Naive thymus-derived CD4-positive, alpha-beta T cell (primary cell): ENCODE measurements at regions of chr12 and their contacts with region 1.

Region 1: GRCh38 chr12:108514973-108515814 is at the start of gene FICD:
- DNase-seq: peak; percentile 93 to 99 (median 98)
- ATAC-seq: peak; percentile 96
- H3K4me3 ChIP-seq: peak within 1 kb of the TSS; percentile 81
- H3K4me3 Mint-ChIP-seq: peak within 1 kb of the TSS; percentile 91 to 97 (median 94)
- H3K27ac ChIP-seq: peak within 1 kb of the TSS; percentile 78
- H3K27ac Mint-ChIP-seq: peak within 1 kb of the TSS; percentile 89 to 95 (median 94)
- H3K4me1 ChIP-seq: peaks cover 8% of the 10 kb centered on the region in 2 donors
- H3K4me1 Mint-ChIP-seq: peaks cover 17 to 40% (median 22%) of the 10 kb centered on the region in 7 donors
- H3K27me3 ChIP-seq: no peaks in the 10 kb centered on the region
- H3K27me3 Mint-ChIP-seq: peaks cover 0 to 2% (median 0%) of the 10 kb centered on the region in 5 donors
- total RNA-seq, gene FICD: 2.8 to 9.7 (median 6.9) TPM

Region 2: DNA sequence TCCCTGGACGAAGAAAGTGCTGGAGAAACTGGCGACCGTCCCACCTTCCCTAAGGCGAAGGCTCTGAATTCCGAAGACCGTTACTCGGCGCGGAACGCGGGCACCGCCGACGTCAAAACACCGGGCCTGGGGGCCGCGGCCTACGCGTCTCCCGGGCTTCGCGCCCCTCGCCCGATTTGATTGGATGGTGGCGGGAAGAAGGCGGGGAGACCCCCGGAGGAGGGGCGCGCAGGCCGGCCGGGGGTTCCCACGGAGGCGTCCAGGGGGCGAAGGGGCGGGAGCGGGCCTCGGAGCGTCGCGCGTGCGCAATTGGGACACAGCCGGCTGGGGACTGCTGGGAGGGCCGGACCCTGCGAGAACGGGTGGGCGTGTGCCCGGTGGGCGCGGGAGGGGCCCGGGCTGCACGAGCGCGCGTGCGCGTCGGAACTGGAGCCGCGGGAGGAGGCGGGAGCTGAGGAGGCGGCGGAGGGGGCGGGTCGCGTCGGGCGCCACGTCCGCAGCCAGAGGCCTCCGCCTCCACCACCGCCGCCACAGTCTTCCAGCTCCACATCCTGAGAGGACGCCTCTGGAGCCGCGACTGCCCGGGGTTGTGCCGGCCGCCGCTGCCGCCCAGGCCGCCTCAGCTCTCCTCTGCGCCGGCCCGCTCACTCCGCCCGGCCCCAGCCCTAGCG is 1559.7 kb before region 1 on chr12 and contains the start of gene TMEM263:
- CTCF ChIA-PET with region 1: no interaction called
- POLR2A ChIA-PET with region 1: no interaction called
- intact Hi-C with region 1: loop called in 1 of 2 experiments (anchors 1 kb)
- DNase-seq: peak; percentile 78 to 91 (median 86)
- ATAC-seq: peak; percentile 90
- H3K4me3 ChIP-seq: peak within 1 kb of the TSS; percentile 94
- H3K4me3 Mint-ChIP-seq: peak within 1 kb of the TSS; percentile 88 to 99 (median 96)
- H3K27ac ChIP-seq: peak within 1 kb of the TSS; percentile 94
- H3K27ac Mint-ChIP-seq: peak within 1 kb of the TSS; percentile 93 to 97 (median 96)
- H3K4me1 ChIP-seq: peaks cover 8 to 10% of the 10 kb centered on the region in 2 donors
- H3K4me1 Mint-ChIP-seq: peaks cover 17 to 57% (median 38%) of the 10 kb centered on the region in 7 donors
- H3K27me3 ChIP-seq: no peaks in the 10 kb centered on the region
- H3K27me3 Mint-ChIP-seq: peaks cover 0 to 11% (median 0%) of the 10 kb centered on the region in 5 donors
- total RNA-seq, gene TMEM263: 20.0 to 45.5 (median 31.5) TPM

Region 3: GRCh38 chr12:107670999-107671643 is 844.1 kb before region 1 on chr12:
- CTCF ChIA-PET with region 1: interaction called, 5 read pairs
- POLR2A ChIA-PET with region 1: no interaction called
- intact Hi-C with region 1: loop called (anchors 1 kb)
- DNase-seq: peak in 2 of 9 donors; percentile 14 to 44
- ATAC-seq: peak; percentile 67
- H3K4me3 ChIP-seq: no peak overlapping the region
- H3K4me3 Mint-ChIP-seq: no peak overlapping the region
- H3K27ac ChIP-seq: no peak overlapping the region
- H3K27ac Mint-ChIP-seq: peak overlapping the region in 1 of 9 donors; percentile 69
- H3K4me1 ChIP-seq: no peaks in the 10 kb centered on the region
- H3K4me1 Mint-ChIP-seq: peaks cover 0 to 7% (median 5%) of the 10 kb centered on the region in 7 donors
- H3K27me3 ChIP-seq: no peaks in the 10 kb centered on the region
- H3K27me3 Mint-ChIP-seq: peaks cover 7 to 25% (median 21%) of the 10 kb centered on the region in 5 donors

Region 4: DNA sequence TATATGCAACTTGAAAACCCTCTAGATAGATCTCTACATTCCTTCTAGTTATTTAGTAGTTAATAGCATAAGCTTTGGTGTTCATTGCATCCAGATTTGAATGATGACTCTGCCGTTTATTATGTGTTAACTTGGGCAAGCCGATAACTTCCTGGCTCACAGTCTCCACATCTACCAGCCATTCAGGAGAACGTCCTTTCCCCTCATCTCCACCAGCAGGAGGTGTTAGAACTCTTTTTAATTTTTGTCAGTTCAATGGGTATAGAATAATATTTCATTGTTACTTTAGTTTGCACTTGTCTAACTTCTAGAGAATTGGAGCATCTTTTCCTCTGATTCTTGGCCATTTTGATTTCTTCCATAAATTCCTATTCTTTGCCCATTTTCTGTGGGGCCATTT is 416.1 kb before region 1 on chr12:
- CTCF ChIA-PET with region 1: no interaction called
- POLR2A ChIA-PET with region 1: no interaction called
- intact Hi-C with region 1: loop called in 1 of 2 experiments (anchors 2 kb)
- DNase-seq: no peak
- ATAC-seq: no peak
- H3K4me3 ChIP-seq: no peak overlapping the region
- H3K4me3 Mint-ChIP-seq: no peak overlapping the region
- H3K27ac ChIP-seq: no peak overlapping the region
- H3K27ac Mint-ChIP-seq: no peak overlapping the region
- H3K4me1 ChIP-seq: no peaks in the 10 kb centered on the region
- H3K4me1 Mint-ChIP-seq: no peaks in the 10 kb centered on the region
- H3K27me3 ChIP-seq: no peaks in the 10 kb centered on the region
- H3K27me3 Mint-ChIP-seq: peaks cover 5 to 26% (median 17%) of the 10 kb centered on the region in 5 donors

Region 5: GRCh38 chr12:108731105-108731865 is 216.1 kb after region 1 on chr12 and contains the start of gene CORO1C:
- CTCF ChIA-PET with region 1: interaction called, 4 read pairs
- POLR2A ChIA-PET with region 1: no interaction called
- intact Hi-C with region 1: loop called (anchors 2 kb)
- DNase-seq: peak; percentile 90 to 99 (median 94)
- ATAC-seq: peak; percentile 88
- H3K4me3 ChIP-seq: peak within 1 kb of the TSS; percentile 99
- H3K4me3 Mint-ChIP-seq: peak within 1 kb of the TSS; percentile 94 to 99 (median 96)
- H3K27ac ChIP-seq: peak within 1 kb of the TSS; percentile 78
- H3K27ac Mint-ChIP-seq: peak within 1 kb of the TSS; percentile 79 to 98 (median 96)
- H3K4me1 ChIP-seq: peaks cover 4 to 6% of the 10 kb centered on the region in 2 donors
- H3K4me1 Mint-ChIP-seq: peaks cover 0 to 44% (median 19%) of the 10 kb centered on the region in 7 donors
- H3K27me3 ChIP-seq: no peaks in the 10 kb centered on the region
- H3K27me3 Mint-ChIP-seq: peaks cover 0 to 9% (median 0%) of the 10 kb centered on the region in 5 donors
- total RNA-seq, gene CORO1C: 7.6 to 71.8 (median 15.7) TPM

Region 6: GRCh38 chr12:109052414-109053323 is 537.5 kb after region 1 on chr12 and contains the start of gene USP30:
- CTCF ChIA-PET with region 1: no interaction called
- POLR2A ChIA-PET with region 1: no interaction called
- intact Hi-C with region 1: loop called (anchors 1 kb)
- DNase-seq: peak; percentile 68 to 86 (median 77)
- ATAC-seq: peak; percentile 93
- H3K4me3 ChIP-seq: peak within 1 kb of the TSS; percentile 91
- H3K4me3 Mint-ChIP-seq: peak within 1 kb of the TSS; percentile 86 to 99 (median 96)
- H3K27ac ChIP-seq: peak within 1 kb of the TSS; percentile 89
- H3K27ac Mint-ChIP-seq: peak within 1 kb of the TSS; percentile 89 to 98 (median 95)
- H3K4me1 ChIP-seq: peaks cover 13% of the 10 kb centered on the region in 2 donors
- H3K4me1 Mint-ChIP-seq: peaks cover 14 to 27% (median 17%) of the 10 kb centered on the region in 7 donors
- H3K27me3 ChIP-seq: no peaks in the 10 kb centered on the region
- H3K27me3 Mint-ChIP-seq: no peaks in the 10 kb centered on the region
- total RNA-seq, gene USP30: 7.8 to 15.7 (median 12.9) TPM

Region 7: GRCh38 chr12:109713187-109713984 is 1198.2 kb after region 1 on chr12 and contains the start of gene FAM222A:
- CTCF ChIA-PET with region 1: no interaction called
- POLR2A ChIA-PET with region 1: no interaction called
- intact Hi-C with region 1: loop called in 1 of 2 experiments (anchors 1 kb)
- DNase-seq: peak; percentile 94 to 99 (median 98)
- ATAC-seq: peak; percentile 94
- H3K4me3 ChIP-seq: peak within 1 kb of the TSS; percentile 41
- H3K4me3 Mint-ChIP-seq: peak within 1 kb of the TSS; percentile 57 to 81 (median 72)
- H3K27ac ChIP-seq: peak within 1 kb of the TSS; percentile 55
- H3K27ac Mint-ChIP-seq: peak within 1 kb of the TSS in 1 of 9 donors; percentile 48
- H3K4me1 ChIP-seq: peaks cover 3 to 11% of the 10 kb centered on the region in 2 donors
- H3K4me1 Mint-ChIP-seq: peaks cover 0 to 4% (median 0%) of the 10 kb centered on the region in 7 donors
- H3K27me3 ChIP-seq: peaks cover 0 to 6% of the 10 kb centered on the region in 2 donors
- H3K27me3 Mint-ChIP-seq: peaks cover 29 to 65% (median 30%) of the 10 kb centered on the region in 5 donors
- total RNA-seq, gene FAM222A: 0.24 to 1.6 (median 0.80) TPM